ENCODE measurements at regions of chr15 and their contacts with region 1.

Region 1: GRCh38 chr15:64667736-64668161 is 107.6 kb downstream of the RBPMS2 start:
- DNase-seq: no peak
- ATAC-seq: no peak
- H3K4me3 ChIP-seq: no peak overlapping the region
- H3K27ac ChIP-seq: no peak overlapping the region
- H3K4me1 ChIP-seq: peaks cover 0 to 10% (median 0%) of the 10 kb centered on the region in 9 donors
- H3K27me3 ChIP-seq: no peaks in the 10 kb centered on the region
- CTCF ChIP-seq: no peak

Region 2: GRCh38 chr15:64209680-64210334 is 457.9 kb before region 1 on chr15:
- intact Hi-C with region 1: loop called in 1 of 10 experiments (anchors 10 kb)
- DNase-seq: no peak
- ATAC-seq: no peak
- H3K4me3 ChIP-seq: no peak overlapping the region
- H3K27ac ChIP-seq: no peak overlapping the region
- H3K4me1 ChIP-seq: no peaks in the 10 kb centered on the region
- H3K27me3 ChIP-seq: no peaks in the 10 kb centered on the region
- CTCF ChIP-seq: peak in 8 of 9 donors; percentile 4 to 68 (median 48)

Region 3: GRCh38 chr15:64224511-64224910 is 443.2 kb before region 1 on chr15:
- intact Hi-C with region 1: loop called in 1 of 10 experiments (anchors 10 kb)
- DNase-seq: peak in 1 of 2 donors; percentile 61
- ATAC-seq: peak in 6 of 8 donors; percentile 27 to 66 (median 44)
- H3K4me3 ChIP-seq: no peak overlapping the region
- H3K27ac ChIP-seq: peak overlapping the region in 2 of 10 donors; percentile 1 to 4
- H3K4me1 ChIP-seq: peaks cover 0 to 19% (median 14%) of the 10 kb centered on the region in 9 donors
- H3K27me3 ChIP-seq: no peaks in the 10 kb centered on the region
- CTCF ChIP-seq: no peak

Region 4: DNA sequence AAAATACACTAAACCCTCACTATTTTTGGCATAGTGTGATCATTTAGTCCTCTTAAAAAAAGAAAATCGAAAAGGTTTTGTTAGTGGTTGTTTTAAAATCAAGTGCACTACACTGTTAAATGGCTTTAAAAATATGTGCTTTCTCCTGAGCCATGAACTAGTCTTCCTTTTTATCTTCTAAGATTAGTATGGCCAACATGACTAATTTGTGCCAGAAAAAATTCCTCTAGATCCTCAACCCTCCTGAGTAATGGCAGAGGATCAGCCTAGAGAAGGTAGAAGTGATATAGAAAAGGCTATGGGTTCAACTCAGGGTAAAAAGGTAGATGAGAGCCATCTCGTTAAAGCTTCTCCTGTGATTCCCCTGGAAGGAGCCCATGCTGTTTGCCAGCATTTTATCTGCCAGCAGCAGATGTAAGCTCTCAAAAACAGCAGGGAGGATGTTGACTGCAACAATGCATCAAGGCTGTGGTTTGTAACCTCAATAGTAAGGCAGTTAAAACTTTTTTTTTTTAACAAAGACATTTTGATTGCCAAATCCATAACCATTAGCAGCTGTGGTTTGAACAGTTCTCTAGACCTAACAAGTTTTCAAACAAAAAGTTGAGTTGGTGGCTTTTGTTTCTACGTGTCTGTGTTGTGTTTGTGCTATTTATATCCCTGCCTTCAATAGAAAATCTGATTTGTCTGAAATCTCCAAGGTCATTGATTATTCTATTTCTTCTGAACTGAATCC is 237.6 kb before region 1 on chr15:
- intact Hi-C with region 1: loop called in 2 of 10 experiments (anchors 10 kb)
- DNase-seq: peak in 1 of 2 donors; percentile 30
- ATAC-seq: peak in 7 of 8 donors; percentile 58 to 79 (median 71)
- H3K4me3 ChIP-seq: no peak overlapping the region
- H3K27ac ChIP-seq: peak overlapping the region in 5 of 10 donors; percentile 6 to 66 (median 34)
- H3K4me1 ChIP-seq: peaks cover 6 to 26% (median 16%) of the 10 kb centered on the region in 9 donors
- H3K27me3 ChIP-seq: no peaks in the 10 kb centered on the region
- CTCF ChIP-seq: no peak

Region 5: GRCh38 chr15:64521726-64522164 is 146.0 kb before region 1 on chr15:
- intact Hi-C with region 1: no loop called
- DNase-seq: peak; percentile 21 to 27
- ATAC-seq: peak; percentile 55 to 94 (median 80)
- H3K4me3 ChIP-seq: peak overlapping the region in 1 of 10 donors; percentile 1
- H3K27ac ChIP-seq: peak overlapping the region in 8 of 10 donors; percentile 1 to 67 (median 37)
- H3K4me1 ChIP-seq: peaks cover 5 to 42% (median 27%) of the 10 kb centered on the region in 9 donors
- H3K27me3 ChIP-seq: no peaks in the 10 kb centered on the region
- CTCF ChIP-seq: no peak

Region 6: GRCh38 chr15:64571857-64572291 is 95.9 kb before region 1 on chr15:
- intact Hi-C with region 1: no loop called
- DNase-seq: no peak
- ATAC-seq: no peak
- H3K4me3 ChIP-seq: no peak overlapping the region
- H3K27ac ChIP-seq: peak overlapping the region in 1 of 10 donors; percentile 44
- H3K4me1 ChIP-seq: peaks cover 0 to 28% (median 4%) of the 10 kb centered on the region in 9 donors
- H3K27me3 ChIP-seq: no peaks in the 10 kb centered on the region
- CTCF ChIP-seq: no peak